ENCODE measurements at regions of chr13 and their contacts with region 1.

Region 1: DNA sequence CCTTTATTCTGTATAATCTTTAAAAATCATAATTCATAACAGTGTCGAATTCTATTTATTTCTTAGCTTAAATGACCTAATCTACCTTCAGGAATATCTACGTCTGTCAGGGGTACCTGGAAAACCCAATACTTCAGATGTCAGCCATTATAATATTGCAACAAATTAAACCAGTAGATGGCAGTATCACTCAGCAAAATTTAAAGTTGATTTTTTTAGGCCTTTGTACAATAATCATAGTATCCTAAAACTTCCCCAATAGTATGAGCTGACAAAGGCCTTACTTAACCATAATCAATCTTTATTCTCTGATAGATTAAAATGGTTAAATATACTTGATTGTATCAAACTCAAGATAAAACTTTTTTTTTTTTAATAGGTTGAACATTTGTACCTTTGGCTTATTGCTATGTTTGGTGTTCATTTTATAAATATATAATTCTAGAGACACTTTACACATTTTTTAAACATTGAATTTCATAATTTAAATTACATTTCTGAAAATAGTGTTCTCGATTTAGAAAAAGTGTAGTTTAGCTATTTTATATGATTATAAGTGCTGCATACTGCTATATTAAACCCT is 830.2 kb upstream of the SPRY2 start:
- DNase-seq: peak; percentile 3
- ATAC-seq: peak; percentile 46; the same call in 1 of the 2 replicates
- H3K4me3 ChIP-seq: no peak overlapping the region
- H3K27ac ChIP-seq: no peak overlapping the region
- H3K4me1 ChIP-seq: no peaks in the 10 kb centered on the region
- H3K27me3 ChIP-seq: no peaks in the 10 kb centered on the region
- CTCF ChIP-seq: peak in 2 of 3 experiments; percentile 42 to 60; a peak in 4 of 6 replicates
- POLR2A ChIP-seq: no peak
- RAD21 ChIP-seq: peak; percentile 46

Region 2: DNA sequence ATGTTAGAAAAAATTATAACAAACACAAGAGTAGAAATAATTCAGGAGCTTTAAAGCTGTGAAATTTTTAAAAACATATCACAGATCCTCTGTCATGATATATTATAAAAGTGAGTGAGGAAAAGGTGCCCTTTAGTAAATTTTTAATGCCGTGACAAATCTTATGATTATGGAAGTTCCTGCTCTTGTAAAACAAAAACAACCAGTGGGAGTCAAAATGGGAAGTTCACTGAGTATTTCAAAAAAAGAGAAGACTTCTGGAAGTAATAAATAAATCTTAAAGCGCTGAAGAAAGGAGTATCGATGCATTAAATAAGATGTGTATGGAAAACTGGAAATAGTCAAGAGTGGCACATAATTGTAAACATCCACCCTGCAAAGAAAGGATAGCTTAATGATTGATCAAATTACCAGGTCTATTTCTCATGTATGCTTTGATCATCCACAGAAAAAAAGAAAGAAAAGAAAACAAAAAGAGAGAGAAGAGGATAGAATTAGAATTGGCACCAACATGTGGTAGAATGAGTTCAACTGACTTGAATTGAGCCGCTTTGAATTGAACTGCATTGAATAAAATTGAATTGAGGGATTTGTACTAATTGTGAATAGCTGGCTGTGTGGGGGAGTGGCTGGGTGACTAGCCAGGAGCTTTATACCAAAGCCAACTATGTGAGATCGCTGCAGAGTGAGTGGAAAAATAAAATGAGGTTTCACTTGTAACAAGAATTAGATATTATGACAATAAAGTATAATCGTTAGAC is 182.6 kb before region 1 on chr13:
- CTCF ChIA-PET with region 1: no interaction called
- POLR2A ChIA-PET with region 1: no interaction called
- RAD21 ChIA-PET with region 1: no interaction called
- intact Hi-C with region 1: no loop called
- DNase-seq: no peak
- ATAC-seq: no peak
- H3K4me3 ChIP-seq: no peak overlapping the region
- H3K27ac ChIP-seq: no peak overlapping the region
- H3K4me1 ChIP-seq: no peaks in the 10 kb centered on the region
- H3K27me3 ChIP-seq: no peaks in the 10 kb centered on the region
- CTCF ChIP-seq: no peak
- POLR2A ChIP-seq: no peak
- RAD21 ChIP-seq: no peak

Region 3: GRCh38 chr13:81106348-81106747 is 64.8 kb before region 1 on chr13:
- CTCF ChIA-PET with region 1: no interaction called
- POLR2A ChIA-PET with region 1: no interaction called
- RAD21 ChIA-PET with region 1: no interaction called
- intact Hi-C with region 1: no loop called
- DNase-seq: no peak
- ATAC-seq: no peak
- H3K4me3 ChIP-seq: no peak overlapping the region
- H3K27ac ChIP-seq: no peak overlapping the region
- H3K4me1 ChIP-seq: no peaks in the 10 kb centered on the region
- H3K27me3 ChIP-seq: no peaks in the 10 kb centered on the region
- CTCF ChIP-seq: no peak
- POLR2A ChIP-seq: no peak
- RAD21 ChIP-seq: no peak

Region 4: GRCh38 chr13:81480634-81481033 is 309.5 kb after region 1 on chr13:
- CTCF ChIA-PET with region 1: interaction called, 19 read pairs
- POLR2A ChIA-PET with region 1: no interaction called
- RAD21 ChIA-PET with region 1: no interaction called
- intact Hi-C with region 1: loop called (anchors 10 kb)
- DNase-seq: no peak
- ATAC-seq: no peak
- H3K4me3 ChIP-seq: no peak overlapping the region
- H3K27ac ChIP-seq: no peak overlapping the region
- H3K4me1 ChIP-seq: no peaks in the 10 kb centered on the region
- H3K27me3 ChIP-seq: no peaks in the 10 kb centered on the region
- CTCF ChIP-seq: 0 out of 6 replicates have a peak, but pooled peaks of 1 of the 3 experiments have one; percentile 7
- POLR2A ChIP-seq: no peak
- RAD21 ChIP-seq: peak; percentile 7; the same call in 1 of the 2 replicates

Region 5: GRCh38 chr13:81487151-81487550 is 316.0 kb after region 1 on chr13:
- CTCF ChIA-PET with region 1: no interaction called
- POLR2A ChIA-PET with region 1: no interaction called
- RAD21 ChIA-PET with region 1: no interaction called
- intact Hi-C with region 1: loop called (anchors 10 kb)
- DNase-seq: peak; percentile 35
- ATAC-seq: peak; percentile 78
- H3K4me3 ChIP-seq: no peak overlapping the region
- H3K27ac ChIP-seq: no peak overlapping the region
- H3K4me1 ChIP-seq: no peaks in the 10 kb centered on the region
- H3K27me3 ChIP-seq: no peaks in the 10 kb centered on the region
- CTCF ChIP-seq: peak; percentile 10 to 56 (median 50); a peak in 4 of 6 replicates
- POLR2A ChIP-seq: no peak
- RAD21 ChIP-seq: peak; percentile 35; the same call in 1 of the 2 replicates

Region 6: DNA sequence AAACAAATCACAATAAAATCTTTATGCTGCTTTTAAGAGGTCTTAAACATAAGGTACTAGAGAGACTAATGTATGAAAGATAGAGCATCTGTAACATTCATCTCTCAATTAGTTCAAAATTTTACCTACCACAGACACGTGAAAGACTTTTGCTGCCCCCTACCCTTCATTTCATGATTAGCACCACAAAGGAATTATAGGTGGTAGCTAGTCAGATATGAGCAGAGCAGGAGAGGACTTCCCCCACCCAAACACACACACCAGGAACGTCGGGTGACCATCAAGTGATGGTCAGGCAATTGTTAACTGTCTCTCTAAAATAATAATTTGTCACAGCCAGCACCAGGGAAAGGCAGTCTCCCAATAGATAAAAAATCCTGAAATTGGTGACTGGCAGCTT is 701.4 kb after region 1 on chr13:
- CTCF ChIA-PET with region 1: interaction called, 5 read pairs
- POLR2A ChIA-PET with region 1: no interaction called
- RAD21 ChIA-PET with region 1: no interaction called
- intact Hi-C with region 1: loop called (anchors 1 kb)
- DNase-seq: peak; percentile 12
- ATAC-seq: peak; percentile 60
- H3K4me3 ChIP-seq: no peak overlapping the region
- H3K27ac ChIP-seq: no peak overlapping the region
- H3K4me1 ChIP-seq: 0 out of 4 replicates have a peak, but pooled peaks cover 0 to 5% of the 10 kb centered on the region in 2 experiments
- H3K27me3 ChIP-seq: no peaks in the 10 kb centered on the region
- CTCF ChIP-seq: peak; percentile 17 to 44 (median 34); a peak in 5 of 6 replicates
- POLR2A ChIP-seq: no peak
- RAD21 ChIP-seq: peak; percentile 53

Measured in HCT116 (cell line).